Naive thymus-derived CD4-positive, alpha-beta T cell (primary cell): ENCODE measurements at regions of chr15 and their contacts with region 1.

Region 1: DNA sequence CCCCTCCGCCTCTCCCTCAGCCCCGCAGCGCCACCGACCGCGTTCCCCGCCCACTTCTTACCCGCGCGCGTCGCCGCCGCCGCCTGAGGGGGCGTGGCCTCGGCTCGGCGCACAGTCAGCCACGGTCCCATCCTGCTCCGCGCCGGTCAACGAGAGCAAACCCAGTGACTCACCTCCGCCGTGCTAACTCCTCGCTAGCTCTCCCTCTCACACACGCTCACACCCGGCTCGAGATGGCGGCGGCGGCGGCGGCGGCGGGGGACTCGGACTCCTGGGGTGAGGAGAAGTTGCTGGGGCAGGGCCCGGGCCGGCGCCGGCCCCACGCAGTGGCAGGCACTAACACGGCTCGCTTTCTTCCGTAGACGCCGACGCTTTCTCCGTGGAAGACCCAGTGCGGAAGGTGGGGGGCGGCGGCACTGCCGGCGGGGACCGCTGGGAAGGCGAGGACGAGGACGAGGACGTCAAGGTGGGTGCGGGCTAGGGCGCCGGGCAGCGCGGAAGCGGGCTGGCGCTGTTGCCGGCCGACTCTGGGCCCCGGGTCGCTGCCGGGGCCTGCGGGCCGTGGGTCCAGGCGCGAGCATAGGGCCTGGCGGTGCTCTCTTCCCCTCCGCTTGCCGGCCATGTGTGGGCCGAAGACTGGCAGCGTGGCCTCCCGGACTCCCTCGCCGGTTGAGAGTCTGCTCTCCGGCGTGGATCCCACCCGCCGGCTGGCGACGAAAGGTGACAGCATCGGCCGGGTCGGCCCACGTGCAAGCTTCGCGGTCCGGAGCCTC is at the start of gene EIF3J:
- DNase-seq: peak; percentile 92 to 96 (median 95)
- ATAC-seq: peak; percentile 95
- H3K4me3 ChIP-seq: peak within 1 kb of the TSS; percentile 96
- H3K4me3 Mint-ChIP-seq: peak within 1 kb of the TSS; percentile 83 to 98 (median 94)
- H3K27ac ChIP-seq: peak within 1 kb of the TSS; percentile 97
- H3K27ac Mint-ChIP-seq: peak within 1 kb of the TSS; percentile 87 to 98 (median 95)
- H3K4me1 ChIP-seq: peaks cover 27 to 29% of the 10 kb centered on the region in 2 donors
- H3K4me1 Mint-ChIP-seq: peaks cover 35 to 60% (median 51%) of the 10 kb centered on the region in 7 donors
- H3K27me3 ChIP-seq: no peaks in the 10 kb centered on the region
- H3K27me3 Mint-ChIP-seq: no peaks in the 10 kb centered on the region
- total RNA-seq, gene EIF3J: 52.9 to 83.4 (median 66.5) TPM

Region 2: GRCh38 chr15:43105778-43106485 is 1431.2 kb before region 1 on chr15 and contains the start of gene UBR1:
- CTCF ChIA-PET with region 1: no interaction called
- POLR2A ChIA-PET with region 1: no interaction called
- intact Hi-C with region 1: loop called in 1 of 2 experiments (anchors 5 kb)
- DNase-seq: peak; percentile 65 to 91 (median 89)
- ATAC-seq: peak; percentile 94
- H3K4me3 ChIP-seq: peak within 1 kb of the TSS; percentile 86
- H3K4me3 Mint-ChIP-seq: peak within 1 kb of the TSS; percentile 86 to 99 (median 95)
- H3K27ac ChIP-seq: peak within 1 kb of the TSS; percentile 99
- H3K27ac Mint-ChIP-seq: peak within 1 kb of the TSS; percentile 97 to 99 (median 98)
- H3K4me1 ChIP-seq: peaks cover 21 to 24% of the 10 kb centered on the region in 2 donors
- H3K4me1 Mint-ChIP-seq: peaks cover 40 to 56% (median 52%) of the 10 kb centered on the region in 7 donors
- H3K27me3 ChIP-seq: no peaks in the 10 kb centered on the region
- H3K27me3 Mint-ChIP-seq: peaks cover 0 to 5% (median 0%) of the 10 kb centered on the region in 5 donors
- total RNA-seq, gene UBR1: 38.4 to 51.7 (median 48.0) TPM

Region 3: DNA sequence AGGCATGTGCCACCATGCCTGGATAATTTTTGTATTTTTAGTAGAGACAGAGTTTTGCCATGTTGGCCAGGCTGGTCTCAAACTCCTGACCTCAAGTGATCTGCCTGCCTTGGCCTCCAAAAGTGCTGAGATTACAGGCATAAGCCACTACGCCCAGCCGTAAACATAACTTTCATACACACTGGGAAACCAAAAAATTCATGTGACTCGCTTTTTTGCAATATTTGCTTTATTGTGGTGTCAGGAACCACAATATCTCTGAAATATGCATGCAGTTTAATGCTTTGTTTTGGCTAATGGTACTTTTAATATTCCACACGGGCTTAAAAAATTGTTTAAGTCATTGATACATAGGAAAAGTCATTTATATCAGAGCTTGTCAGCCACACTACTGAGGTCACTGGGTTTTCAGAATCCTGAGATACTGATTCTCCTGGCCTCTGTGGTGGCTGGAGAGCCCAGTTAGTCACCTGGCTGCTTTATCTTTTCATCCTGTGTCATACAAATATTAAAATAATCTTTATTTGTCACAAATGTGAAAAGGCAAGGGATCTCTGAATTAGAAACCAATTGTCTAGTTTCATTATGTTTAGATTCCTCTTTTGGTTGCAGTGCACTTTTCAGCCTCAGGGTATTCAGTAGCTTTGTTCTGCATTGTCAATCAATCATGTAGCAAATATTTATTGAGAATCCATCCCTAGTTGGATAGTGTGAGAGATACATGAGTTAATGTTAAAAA is 1393.8 kb before region 1 on chr15:
- CTCF ChIA-PET with region 1: no interaction called
- POLR2A ChIA-PET with region 1: no interaction called
- intact Hi-C with region 1: no loop called
- DNase-seq: no peak
- ATAC-seq: no peak
- H3K4me3 ChIP-seq: no peak overlapping the region
- H3K4me3 Mint-ChIP-seq: peak overlapping the region in 3 of 10 donors; percentile 9 to 34 (median 16)
- H3K27ac ChIP-seq: no peak overlapping the region
- H3K27ac Mint-ChIP-seq: peak overlapping the region in 1 of 9 donors; percentile 9
- H3K4me1 ChIP-seq: peaks cover 0 to 6% of the 10 kb centered on the region in 2 donors
- H3K4me1 Mint-ChIP-seq: peaks cover 13 to 22% (median 14%) of the 10 kb centered on the region in 7 donors
- H3K27me3 ChIP-seq: no peaks in the 10 kb centered on the region
- H3K27me3 Mint-ChIP-seq: no peaks in the 10 kb centered on the region

Region 4: GRCh38 chr15:43749690-43750345 is 787.3 kb before region 1 on chr15:
- CTCF ChIA-PET with region 1: no interaction called
- POLR2A ChIA-PET with region 1: no interaction called
- intact Hi-C with region 1: loop called in 1 of 2 experiments (anchors 2 kb)
- DNase-seq: peak in 8 of 9 donors; percentile 38 to 84 (median 77)
- ATAC-seq: peak; percentile 59
- H3K4me3 ChIP-seq: peak overlapping the region; percentile 53
- H3K4me3 Mint-ChIP-seq: peak overlapping the region; percentile 75 to 97 (median 82)
- H3K27ac ChIP-seq: peak overlapping the region; percentile 75
- H3K27ac Mint-ChIP-seq: peak overlapping the region; percentile 77 to 92 (median 90)
- H3K4me1 ChIP-seq: peaks cover 30 to 43% of the 10 kb centered on the region in 2 donors
- H3K4me1 Mint-ChIP-seq: peaks cover 37 to 66% (median 54%) of the 10 kb centered on the region in 7 donors
- H3K27me3 ChIP-seq: no peaks in the 10 kb centered on the region
- H3K27me3 Mint-ChIP-seq: no peaks in the 10 kb centered on the region

Region 5: GRCh38 chr15:44319385-44319784 is 217.8 kb before region 1 on chr15:
- CTCF ChIA-PET with region 1: no interaction called
- POLR2A ChIA-PET with region 1: no interaction called
- intact Hi-C with region 1: no loop called
- DNase-seq: no peak
- ATAC-seq: no peak
- H3K4me3 ChIP-seq: no peak overlapping the region
- H3K4me3 Mint-ChIP-seq: no peak overlapping the region
- H3K27ac ChIP-seq: no peak overlapping the region
- H3K27ac Mint-ChIP-seq: no peak overlapping the region
- H3K4me1 ChIP-seq: no peaks in the 10 kb centered on the region
- H3K4me1 Mint-ChIP-seq: peaks cover 5 to 56% (median 26%) of the 10 kb centered on the region in 7 donors
- H3K27me3 ChIP-seq: no peaks in the 10 kb centered on the region
- H3K27me3 Mint-ChIP-seq: no peaks in the 10 kb centered on the region

Region 6: GRCh38 chr15:44426975-44427755 is 110.0 kb before region 1 on chr15 and contains the start of gene CTDSPL2:
- CTCF ChIA-PET with region 1: no interaction called
- POLR2A ChIA-PET with region 1: interaction called, 3 read pairs
- intact Hi-C with region 1: loop called (anchors 1 kb)
- DNase-seq: peak; percentile 87 to 98 (median 94)
- ATAC-seq: peak; percentile 98
- H3K4me3 ChIP-seq: peak within 1 kb of the TSS; percentile 94
- H3K4me3 Mint-ChIP-seq: peak within 1 kb of the TSS; percentile 95 to 99 (median 98)
- H3K27ac ChIP-seq: peak within 1 kb of the TSS; percentile 94
- H3K27ac Mint-ChIP-seq: peak within 1 kb of the TSS; percentile 98 to 100 (median 99)
- H3K4me1 ChIP-seq: peaks cover 10% of the 10 kb centered on the region in 2 donors
- H3K4me1 Mint-ChIP-seq: peaks cover 35 to 65% (median 51%) of the 10 kb centered on the region in 7 donors
- H3K27me3 ChIP-seq: no peaks in the 10 kb centered on the region
- H3K27me3 Mint-ChIP-seq: peaks cover 0 to 2% (median 0%) of the 10 kb centered on the region in 5 donors
- total RNA-seq, gene CTDSPL2: 60.3 to 81.8 (median 77.3) TPM

Region 7: DNA sequence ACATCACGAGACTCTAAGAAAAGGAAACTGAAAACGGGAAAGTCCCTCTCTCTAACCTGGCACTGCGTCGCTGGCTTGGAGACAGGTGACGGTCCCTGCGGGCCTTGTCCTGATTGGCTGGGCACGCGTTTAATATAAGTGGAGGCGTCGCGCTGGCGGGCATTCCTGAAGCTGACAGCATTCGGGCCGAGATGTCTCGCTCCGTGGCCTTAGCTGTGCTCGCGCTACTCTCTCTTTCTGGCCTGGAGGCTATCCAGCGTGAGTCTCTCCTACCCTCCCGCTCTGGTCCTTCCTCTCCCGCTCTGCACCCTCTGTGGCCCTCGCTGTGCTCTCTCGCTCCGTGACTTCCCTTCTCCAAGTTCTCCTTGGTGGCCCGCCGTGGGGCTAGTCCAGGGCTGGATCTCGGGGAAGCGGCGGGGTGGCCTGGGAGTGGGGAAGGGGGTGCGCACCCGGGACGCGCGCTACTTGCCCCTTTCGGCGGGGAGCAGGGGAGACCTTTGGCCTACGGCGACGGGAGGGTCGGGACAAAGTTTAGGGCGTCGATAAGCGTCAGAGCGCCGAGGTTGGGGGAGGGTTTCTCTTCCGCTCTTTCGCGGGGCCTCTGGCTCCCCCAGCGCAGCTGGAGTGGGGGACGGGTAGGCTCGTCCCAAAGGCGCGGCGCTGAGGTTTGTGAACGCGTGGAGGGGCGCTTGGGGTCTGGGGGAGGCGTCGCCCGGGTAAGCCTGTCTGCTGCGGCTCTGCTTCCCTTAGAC is 174.4 kb after region 1 on chr15 and contains the start of gene B2M:
- CTCF ChIA-PET with region 1: no interaction called
- POLR2A ChIA-PET with region 1: interaction called, 7 read pairs
- intact Hi-C with region 1: loop called in 1 of 2 experiments (anchors 2 kb)
- DNase-seq: peak; percentile 95 to 98 (median 97)
- ATAC-seq: peak; percentile 84
- H3K4me3 ChIP-seq: peak within 1 kb of the TSS; percentile 83
- H3K4me3 Mint-ChIP-seq: peak within 1 kb of the TSS; percentile 93 to 100 (median 98)
- H3K27ac ChIP-seq: peak within 1 kb of the TSS; percentile 95
- H3K27ac Mint-ChIP-seq: peak within 1 kb of the TSS; percentile 98 to 100 (median 100)
- H3K4me1 ChIP-seq: peaks cover 15 to 26% of the 10 kb centered on the region in 2 donors
- H3K4me1 Mint-ChIP-seq: peaks cover 31 to 76% (median 54%) of the 10 kb centered on the region in 7 donors
- H3K27me3 ChIP-seq: no peaks in the 10 kb centered on the region
- H3K27me3 Mint-ChIP-seq: peaks cover 0 to 17% (median 0%) of the 10 kb centered on the region in 5 donors
- total RNA-seq, gene B2M: 4,325 to 8,698 (median 6,221) TPM

Region 8: DNA sequence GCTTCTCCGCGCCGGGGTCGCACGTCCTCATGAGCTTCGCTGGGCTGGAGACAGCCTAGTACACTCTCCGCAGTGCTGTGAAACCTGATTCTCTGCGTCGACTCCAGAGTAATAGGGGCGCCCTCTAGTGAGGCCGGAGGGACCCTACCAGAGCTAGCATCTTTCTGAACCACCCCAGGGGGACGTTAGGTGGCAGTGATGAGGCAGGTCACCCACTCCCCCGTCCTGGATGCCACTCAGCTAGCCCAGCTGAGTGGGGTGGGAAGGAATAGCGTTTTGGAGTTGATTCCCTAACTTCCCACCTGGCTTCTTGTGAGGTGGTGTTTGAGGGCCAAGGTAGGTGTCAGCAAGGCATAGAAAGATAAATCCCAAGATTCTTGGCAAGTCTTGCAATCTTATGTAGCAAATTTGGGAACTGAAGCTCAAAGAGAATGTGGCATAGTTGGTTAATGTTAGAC is 581.0 kb after region 1 on chr15:
- CTCF ChIA-PET with region 1: no interaction called
- POLR2A ChIA-PET with region 1: no interaction called
- intact Hi-C with region 1: loop called in 1 of 2 experiments (anchors 2 kb)
- DNase-seq: peak; percentile 64 to 86 (median 81)
- ATAC-seq: peak; percentile 99
- H3K4me3 ChIP-seq: peak overlapping the region; percentile 34
- H3K4me3 Mint-ChIP-seq: peak overlapping the region; percentile 69 to 91 (median 82)
- H3K27ac ChIP-seq: no peak overlapping the region
- H3K27ac Mint-ChIP-seq: peak overlapping the region in 1 of 9 donors; percentile 47
- H3K4me1 ChIP-seq: peaks cover 0 to 35% of the 10 kb centered on the region in 2 donors
- H3K4me1 Mint-ChIP-seq: peaks cover 19 to 42% (median 33%) of the 10 kb centered on the region in 7 donors
- H3K27me3 ChIP-seq: peaks cover 4 to 27% of the 10 kb centered on the region in 2 donors
- H3K27me3 Mint-ChIP-seq: peaks cover 50 to 82% (median 65%) of the 10 kb centered on the region in 5 donors